Mammary epithelial cell (primary cell): ENCODE measurements at regions of chr5 and their contacts with region 1.

Region 1: DNA sequence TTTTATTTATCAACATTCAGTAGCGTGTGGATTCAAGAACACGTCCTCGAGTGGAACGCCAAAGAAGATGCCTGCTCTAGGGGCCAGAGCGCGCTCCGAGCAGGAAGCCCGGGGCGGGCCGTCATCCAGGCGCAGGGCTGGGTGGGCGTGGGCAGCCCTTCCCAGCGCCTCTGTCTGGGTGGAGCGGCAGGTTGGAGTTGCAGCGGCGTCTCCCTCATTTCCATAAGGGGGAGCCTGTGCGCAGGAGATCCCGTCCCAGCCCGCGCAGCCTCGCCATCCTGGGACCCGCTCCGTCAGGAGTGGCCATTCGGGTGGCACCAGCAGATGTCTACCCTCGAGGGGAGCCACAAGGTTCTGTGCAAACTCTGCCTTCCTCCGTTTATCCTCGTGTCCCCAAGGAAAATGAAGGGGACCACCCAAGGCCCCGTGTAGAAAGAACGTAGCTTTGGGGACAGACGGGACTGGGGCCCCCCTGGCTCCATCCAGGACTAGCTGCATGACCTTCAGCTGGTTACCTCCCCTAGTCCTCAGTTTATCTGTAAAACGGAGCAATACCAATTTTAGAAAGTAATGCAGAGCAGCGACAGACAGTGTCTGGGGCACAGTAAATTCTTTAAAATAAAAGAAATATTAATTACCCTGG is 155.5 kb upstream of the SMIM23 start:
- DNase-seq: peak; percentile 40
- H3K4me3 ChIP-seq: no peak overlapping the region
- H3K27ac ChIP-seq: no peak overlapping the region
- H3K4me1 ChIP-seq: no peaks in the 10 kb centered on the region
- H3K27me3 ChIP-seq: no peaks in the 10 kb centered on the region
- CTCF ChIP-seq: peak in 1 of 2 donors; percentile 74

Region 2: GRCh38 chr5:171484460-171484899 is 145.7 kb before region 1 on chr5:
- CTCF ChIA-PET with region 1: no interaction called
- dilution Hi-C with region 1: no loop called
- in situ Hi-C with region 1: no loop called
- intact Hi-C with region 1: loop called (anchors 5 kb)
- DNase-seq: no peak
- H3K4me3 ChIP-seq: no peak overlapping the region
- H3K27ac ChIP-seq: no peak overlapping the region
- H3K4me1 ChIP-seq: no peaks in the 10 kb centered on the region
- H3K27me3 ChIP-seq: no peaks in the 10 kb centered on the region
- CTCF ChIP-seq: peak; percentile 60 to 70

Region 3: GRCh38 chr5:171580502-171581265 is 49.5 kb before region 1 on chr5:
- CTCF ChIA-PET with region 1: no interaction called
- dilution Hi-C with region 1: loop called (anchors 5 kb)
- in situ Hi-C with region 1: no loop called
- intact Hi-C with region 1: no loop called
- DNase-seq: peak; percentile 18
- H3K4me3 ChIP-seq: no peak overlapping the region
- H3K27ac ChIP-seq: no peak overlapping the region
- H3K4me1 ChIP-seq: no peaks in the 10 kb centered on the region
- H3K27me3 ChIP-seq: no peaks in the 10 kb centered on the region
- CTCF ChIP-seq: no peak

Region 4: DNA sequence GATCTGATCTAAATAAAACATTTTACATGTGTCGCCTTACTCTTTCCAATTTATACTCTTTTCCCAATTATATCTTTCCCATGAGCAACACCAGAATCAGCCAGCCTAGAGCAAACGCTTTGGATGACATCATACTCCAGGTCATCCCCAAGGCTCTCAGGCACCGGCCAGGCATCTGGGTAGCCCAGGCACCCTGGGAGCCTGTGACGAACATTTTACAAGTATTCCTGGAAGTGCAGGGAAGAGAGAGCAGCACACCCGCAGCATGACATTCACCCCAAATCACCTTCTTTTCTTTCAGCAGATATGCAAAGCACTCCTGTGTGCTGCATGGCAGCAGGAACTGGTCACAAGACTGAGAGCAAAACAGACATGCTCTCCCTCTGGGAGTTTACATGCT is 79.8 kb after region 1 on chr5:
- CTCF ChIA-PET with region 1: no interaction called
- dilution Hi-C with region 1: loop called (anchors 5 kb)
- in situ Hi-C with region 1: no loop called
- intact Hi-C with region 1: no loop called
- DNase-seq: no peak
- H3K4me3 ChIP-seq: no peak overlapping the region
- H3K27ac ChIP-seq: no peak overlapping the region
- H3K4me1 ChIP-seq: no peaks in the 10 kb centered on the region
- H3K27me3 ChIP-seq: no peaks in the 10 kb centered on the region
- CTCF ChIP-seq: no peak

Region 5: DNA sequence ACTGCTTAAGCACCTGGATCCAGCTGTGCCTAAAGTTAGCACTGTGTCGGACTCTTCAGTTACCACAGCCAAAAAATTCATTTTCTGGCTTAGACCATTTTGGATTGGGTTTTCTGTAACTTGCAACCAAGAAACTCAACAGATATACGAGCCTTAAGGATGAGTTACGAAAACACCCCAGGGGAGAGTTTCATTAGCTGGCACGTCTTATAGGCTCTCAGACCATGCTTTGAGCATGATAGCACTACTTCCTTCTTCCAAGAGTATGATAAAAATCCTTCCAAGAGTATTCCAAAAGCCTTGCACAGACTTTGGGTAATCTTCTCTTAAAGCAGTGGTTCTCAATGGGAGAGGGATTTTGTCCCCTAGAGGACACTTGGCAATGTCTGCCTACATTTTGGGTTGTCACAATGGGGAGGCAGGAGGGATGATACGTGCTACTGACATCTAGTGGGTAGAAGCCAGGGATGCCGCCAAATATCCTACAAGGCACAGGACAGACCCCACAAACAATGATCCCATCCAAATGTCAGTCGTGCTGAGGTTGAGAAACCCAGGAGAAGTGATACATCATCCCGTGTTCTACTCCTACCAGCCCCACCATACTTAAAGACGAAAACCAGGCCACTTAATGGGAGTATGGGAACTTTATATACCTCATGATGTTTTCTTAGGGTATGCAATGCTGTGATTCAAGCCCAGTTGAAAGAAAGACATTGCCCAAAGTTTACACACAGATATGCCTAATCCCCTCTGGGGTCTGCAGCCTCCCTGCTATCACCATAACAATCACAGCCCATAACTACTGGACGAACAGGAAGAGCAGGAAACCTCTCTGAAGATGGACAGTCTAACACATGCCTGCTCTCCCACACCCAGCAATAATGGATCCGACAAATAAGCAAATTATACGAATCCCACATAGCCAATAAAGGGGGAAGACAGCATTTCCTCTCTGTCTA is 220.5 kb after region 1 on chr5:
- CTCF ChIA-PET with region 1: no interaction called
- dilution Hi-C with region 1: no loop called
- in situ Hi-C with region 1: loop called in 1 of 2 experiments (anchors 25 kb)
- intact Hi-C with region 1: loop called (anchors 1 kb)
- DNase-seq: no peak
- H3K4me3 ChIP-seq: no peak overlapping the region
- H3K27ac ChIP-seq: no peak overlapping the region
- H3K4me1 ChIP-seq: peaks cover 9% of the 10 kb centered on the region
- H3K27me3 ChIP-seq: no peaks in the 10 kb centered on the region
- CTCF ChIP-seq: peak; percentile 24 to 50

Region 6: GRCh38 chr5:172044631-172045314 is 414.6 kb after region 1 on chr5:
- CTCF ChIA-PET with region 1: no interaction called
- dilution Hi-C with region 1: no loop called
- in situ Hi-C with region 1: no loop called
- intact Hi-C with region 1: loop called (anchors 10 kb)
- DNase-seq: no peak
- H3K4me3 ChIP-seq: no peak overlapping the region
- H3K27ac ChIP-seq: no peak overlapping the region
- H3K4me1 ChIP-seq: no peaks in the 10 kb centered on the region
- H3K27me3 ChIP-seq: no peaks in the 10 kb centered on the region
- CTCF ChIP-seq: no peak